ENCODE measurements at regions of chr21 and their contacts with region 1.

Region 1: GRCh38 chr21:15809818-15810217 is 80.0 kb downstream of the USP25 start:
- DNase-seq: peak; percentile 51 to 71
- ATAC-seq: peak; percentile 69 to 75
- H3K4me3 ChIP-seq: no peak overlapping the region
- H3K27ac ChIP-seq: peak overlapping the region; percentile 72 to 79 (median 74)
- H3K4me1 ChIP-seq: peaks cover 31 to 32% of the 10 kb centered on the region in 2 donors
- H3K27me3 ChIP-seq: no peaks in the 10 kb centered on the region
- CTCF ChIP-seq: no peak
- POLR2A ChIP-seq: no peak

Region 2: DNA sequence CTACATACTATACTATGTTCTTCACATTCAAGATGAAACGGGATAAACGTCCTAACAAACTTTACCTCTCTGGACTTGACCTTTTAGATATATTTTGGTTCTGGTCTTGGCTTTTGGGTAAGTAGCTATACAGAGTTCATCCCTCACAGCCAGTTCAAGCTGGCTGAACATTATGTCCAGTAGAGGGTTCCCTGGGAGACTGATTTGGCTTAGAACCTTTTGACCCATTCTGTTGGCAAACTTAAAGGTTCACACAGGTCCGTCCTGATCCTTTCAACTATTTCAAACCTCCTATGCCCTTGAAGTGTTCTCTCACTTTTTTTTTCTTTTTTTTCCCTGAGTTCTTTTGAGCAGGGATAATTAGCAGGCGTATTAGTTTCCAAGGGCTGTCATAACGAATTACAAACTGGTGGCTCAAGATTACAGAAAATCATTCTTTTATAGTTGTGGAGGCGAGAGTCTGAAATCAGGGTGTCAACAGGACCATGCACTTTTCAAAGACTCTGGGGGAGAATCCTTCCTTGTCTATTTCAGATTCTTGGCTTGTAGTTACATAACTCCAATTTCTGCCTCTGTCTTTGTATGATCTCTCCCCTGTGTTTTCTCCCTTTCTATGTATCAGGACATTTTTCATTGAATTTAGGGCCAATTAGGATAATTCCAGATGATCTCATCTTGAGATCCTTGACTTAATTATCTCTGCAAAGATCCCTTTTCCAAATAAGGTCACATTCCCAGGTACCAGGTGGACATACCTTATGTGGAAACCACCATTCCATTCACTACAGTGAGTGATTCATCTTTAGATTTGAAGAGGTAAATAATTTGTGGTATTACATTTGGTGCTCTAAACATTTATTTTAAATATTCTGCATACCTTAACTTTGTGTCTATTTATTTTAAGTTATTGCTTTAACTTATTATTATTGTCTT is 337.4 kb before region 1 on chr21:
- in situ Hi-C with region 1: no loop called
- intact Hi-C with region 1: no loop called
- DNase-seq: peak; percentile 17 to 32
- ATAC-seq: peak; percentile 93 to 98
- H3K4me3 ChIP-seq: no peak overlapping the region
- H3K27ac ChIP-seq: peak overlapping the region in 2 of 4 donors; percentile 63 to 73
- H3K4me1 ChIP-seq: peaks cover 25 to 36% of the 10 kb centered on the region in 2 donors
- H3K27me3 ChIP-seq: no peaks in the 10 kb centered on the region
- CTCF ChIP-seq: no peak
- POLR2A ChIP-seq: no peak

Region 3: GRCh38 chr21:15729674-15730483 is 79.9 kb before region 1 on chr21 and contains the start of gene USP25:
- in situ Hi-C with region 1: no loop called
- intact Hi-C with region 1: loop called (anchors 1 kb)
- DNase-seq: peak; percentile 91 to 93
- ATAC-seq: peak; percentile 86
- H3K4me3 ChIP-seq: peak within 1 kb of the TSS; percentile 60 to 83 (median 78)
- H3K27ac ChIP-seq: peak within 1 kb of the TSS; percentile 92 to 95 (median 94)
- H3K4me1 ChIP-seq: peaks cover 13 to 22% of the 10 kb centered on the region in 2 donors
- H3K27me3 ChIP-seq: no peaks in the 10 kb centered on the region
- CTCF ChIP-seq: peak in 3 of 5 experiments; percentile 16 to 42 (median 28)
- POLR2A ChIP-seq: peak; percentile 87 to 95
- total RNA-seq, gene USP25: 99.4 to 130 (median 107) TPM

Measured in gastrocnemius medialis (tissue), 4 donors.